Heart left ventricle (tissue), 16 donors: ENCODE measurements at regions of chr1 and their contacts with region 1.

Region 1: DNA sequence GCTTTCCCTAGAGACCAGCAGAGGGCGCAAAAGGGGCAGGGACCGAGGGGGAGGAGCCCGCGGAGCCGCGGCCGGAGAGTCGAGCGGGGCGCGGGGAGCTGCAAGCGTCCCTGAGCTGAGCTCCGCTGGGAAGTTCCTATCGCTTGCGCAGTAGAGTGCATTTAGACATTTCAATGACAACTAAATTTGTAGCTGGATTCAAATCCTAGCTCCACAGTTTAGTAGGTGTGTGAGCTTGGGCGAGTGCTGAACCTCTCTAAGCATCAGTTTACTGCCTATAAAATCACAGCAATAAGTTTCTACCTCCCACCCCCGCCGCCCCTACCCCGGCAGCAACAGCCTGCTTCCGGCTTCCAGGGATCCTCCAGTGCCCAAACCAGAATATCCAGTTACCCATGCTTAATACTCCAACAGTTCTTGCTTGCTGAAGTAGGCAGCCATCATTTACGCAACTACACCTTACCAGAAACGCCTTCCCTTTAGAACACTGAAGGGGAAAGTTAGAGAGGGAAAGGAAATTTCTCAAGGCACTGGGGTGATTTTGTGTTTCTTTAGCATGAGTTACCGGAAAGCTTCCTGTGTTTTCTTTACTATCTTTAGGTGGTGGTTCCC is 9.1 kb downstream of the TLR5 start:
- DNase-seq: peak; percentile 84 to 92 (median 88)
- ATAC-seq: peak; percentile 83 to 91 (median 90)
- H3K4me3 ChIP-seq: peak overlapping the region in 10 of 12 donors; percentile 23 to 55 (median 43)
- H3K27ac ChIP-seq: peak overlapping the region in 6 of 12 donors; percentile 7 to 68 (median 42)
- H3K4me1 ChIP-seq: peaks cover 0 to 59% (median 18%) of the 10 kb centered on the region in 12 donors
- H3K27me3 ChIP-seq: no peaks in the 10 kb centered on the region
- CTCF ChIP-seq: peak in 11 of 12 donors; percentile 92 to 99 (median 96)
- POLR2A ChIP-seq: no peak

Region 2: GRCh38 chr1:223087291-223088255 is 46.4 kb before region 1 on chr1:
- intact Hi-C with region 1: loop called in 3 of 10 experiments (anchors 5 kb)
- DNase-seq: no peak
- ATAC-seq: peak in 1 of 4 donors; percentile 22
- H3K4me3 ChIP-seq: no peak overlapping the region
- H3K27ac ChIP-seq: peak overlapping the region in 9 of 12 donors; percentile 17 to 83 (median 48)
- H3K4me1 ChIP-seq: peaks cover 0 to 14% (median 4%) of the 10 kb centered on the region in 12 donors
- H3K27me3 ChIP-seq: no peaks in the 10 kb centered on the region
- CTCF ChIP-seq: no peak
- POLR2A ChIP-seq: no peak

Region 3: DNA sequence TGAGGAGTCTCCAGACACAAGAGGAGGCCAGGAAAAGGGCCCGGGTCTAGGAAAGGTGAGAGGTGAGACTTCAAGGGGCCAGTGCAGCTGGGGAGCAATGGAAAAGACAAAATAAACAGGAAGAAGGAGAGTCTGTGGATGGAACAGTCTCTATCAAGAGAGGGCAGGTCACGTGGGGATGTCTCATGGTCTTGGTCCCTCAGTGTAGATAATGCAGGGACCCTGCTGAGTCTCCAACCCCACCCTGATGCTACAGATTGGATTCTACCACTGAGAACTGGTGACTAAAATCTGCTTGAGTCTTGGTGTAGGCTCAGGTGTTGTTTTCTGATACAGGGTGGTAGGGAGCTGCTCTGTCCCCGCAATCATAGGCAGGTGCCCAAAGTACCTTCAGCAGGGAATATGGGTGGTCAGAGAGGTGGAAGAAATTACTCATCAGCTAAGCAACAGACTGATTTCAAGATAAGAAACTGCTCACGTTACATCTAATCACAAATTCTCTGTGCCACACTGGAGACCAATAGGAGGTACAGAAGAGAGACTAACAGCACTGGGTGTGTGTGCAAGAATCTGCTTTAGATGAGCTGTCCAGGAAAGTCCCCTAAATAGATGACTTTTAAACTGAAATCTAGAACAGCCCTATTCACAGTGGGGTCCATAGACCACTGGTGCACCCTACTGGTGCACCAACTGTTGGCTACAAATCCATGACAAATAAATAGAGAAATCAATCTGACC is 110.6 kb after region 1 on chr1:
- intact Hi-C with region 1: loop called (anchors 2 to 5 kb)
- DNase-seq: no peak
- ATAC-seq: peak in 1 of 4 donors; percentile 53
- H3K4me3 ChIP-seq: no peak overlapping the region
- H3K27ac ChIP-seq: no peak overlapping the region
- H3K4me1 ChIP-seq: peaks cover 0 to 2% (median 0%) of the 10 kb centered on the region in 12 donors
- H3K27me3 ChIP-seq: no peaks in the 10 kb centered on the region
- CTCF ChIP-seq: peak in 10 of 12 donors; percentile 23 to 59 (median 42)
- POLR2A ChIP-seq: no peak

Region 4: GRCh38 chr1:223429313-223429731 is 295.4 kb after region 1 on chr1:
- intact Hi-C with region 1: loop called in 1 of 10 experiments (anchors 10 kb)
- DNase-seq: peak in 4 of 5 donors; percentile 28 to 45 (median 39)
- ATAC-seq: peak; percentile 79 to 92 (median 90)
- H3K4me3 ChIP-seq: no peak overlapping the region
- H3K27ac ChIP-seq: peak overlapping the region in 11 of 12 donors; percentile 45 to 73 (median 60)
- H3K4me1 ChIP-seq: peaks cover 0 to 26% (median 4%) of the 10 kb centered on the region in 12 donors
- H3K27me3 ChIP-seq: no peaks in the 10 kb centered on the region
- CTCF ChIP-seq: peak in 1 of 12 donors; percentile 9
- POLR2A ChIP-seq: no peak

Region 5: DNA sequence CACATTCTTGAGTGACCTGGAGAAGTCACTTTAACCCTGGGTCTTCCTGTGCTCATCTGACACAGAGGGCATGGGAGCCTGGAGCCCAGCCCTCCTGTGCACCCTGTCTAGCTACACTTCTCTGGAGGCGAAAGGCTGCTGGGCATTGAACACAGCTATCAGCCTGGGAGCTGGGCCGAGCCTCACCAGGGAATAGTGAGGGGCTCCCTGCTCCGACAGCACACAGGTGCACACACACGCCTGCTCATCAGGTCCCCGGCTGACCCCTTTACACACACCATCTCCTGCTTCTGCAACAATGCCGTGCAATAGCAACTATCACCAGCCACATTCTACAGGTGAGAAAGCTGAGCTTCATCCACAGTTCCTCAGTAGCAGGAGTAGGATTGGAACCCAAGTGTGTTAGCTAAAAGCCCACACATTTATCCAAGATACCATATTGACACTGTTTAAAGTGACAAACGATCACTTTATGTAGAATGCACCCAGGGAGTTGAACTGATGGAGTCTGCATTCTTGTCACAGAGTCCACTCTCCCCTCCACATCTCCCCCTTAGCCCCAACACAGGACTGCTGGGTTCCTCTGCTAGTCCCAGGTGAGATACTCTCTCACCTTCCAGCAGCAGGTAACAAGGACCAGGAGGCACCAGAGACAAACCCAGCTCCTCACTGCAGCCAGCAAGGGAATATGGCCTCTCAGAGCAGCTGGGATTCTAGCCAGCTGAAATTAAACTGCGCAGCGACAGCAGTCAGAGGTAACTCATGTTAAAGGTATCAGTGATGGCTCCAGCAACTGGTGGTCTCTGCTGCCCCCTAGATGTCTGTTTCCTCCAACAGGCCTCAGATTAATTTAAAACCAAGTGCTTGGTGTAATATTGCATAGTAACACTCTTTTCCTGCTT is 549.9 kb after region 1 on chr1:
- intact Hi-C with region 1: loop called (anchors 2 to 5 kb)
- DNase-seq: peak in 4 of 5 donors; percentile 21 to 51 (median 34)
- ATAC-seq: peak; percentile 26 to 67 (median 44)
- H3K4me3 ChIP-seq: no peak overlapping the region
- H3K27ac ChIP-seq: no peak overlapping the region
- H3K4me1 ChIP-seq: peaks cover 0 to 4% (median 0%) of the 10 kb centered on the region in 12 donors
- H3K27me3 ChIP-seq: peaks cover 0 to 9% (median 0%) of the 10 kb centered on the region in 9 donors
- CTCF ChIP-seq: peak; percentile 34 to 70 (median 59)
- POLR2A ChIP-seq: no peak

Region 6: DNA sequence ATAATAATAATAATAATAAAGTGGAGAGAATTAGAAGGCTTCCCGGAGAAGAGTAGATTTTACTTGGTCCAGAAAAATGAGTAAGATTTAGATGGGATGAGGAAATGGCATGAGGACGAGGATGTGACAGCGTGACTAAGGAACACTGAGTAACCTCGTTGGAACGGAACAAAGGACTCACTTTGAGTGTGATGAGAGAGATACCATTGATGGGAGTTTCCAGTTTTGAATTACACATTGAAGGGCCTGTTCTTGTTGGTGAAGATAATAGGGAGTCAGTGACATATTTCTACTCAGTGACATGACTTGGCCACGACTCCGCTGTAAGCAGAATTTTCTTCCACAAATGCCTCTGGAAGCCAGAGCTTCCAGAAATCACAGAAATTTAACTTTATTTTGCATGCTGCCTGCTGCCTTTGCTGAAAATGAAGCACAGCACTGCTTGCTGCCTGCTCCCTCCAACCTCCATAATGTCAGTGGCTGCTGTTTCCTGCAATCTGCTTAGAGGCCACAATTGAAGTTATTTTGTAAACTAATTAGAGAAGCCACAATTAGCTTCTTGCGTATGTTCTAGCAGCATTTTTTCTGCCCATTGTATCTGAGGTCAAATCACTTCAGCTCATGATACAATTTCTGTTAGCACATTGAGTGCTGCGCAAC is 946.3 kb after region 1 on chr1:
- intact Hi-C with region 1: no loop called
- DNase-seq: no peak
- ATAC-seq: no peak
- H3K4me3 ChIP-seq: no peak overlapping the region
- H3K27ac ChIP-seq: no peak overlapping the region
- H3K4me1 ChIP-seq: no peaks in the 10 kb centered on the region
- H3K27me3 ChIP-seq: peaks cover 0 to 6% (median 0%) of the 10 kb centered on the region in 9 donors
- CTCF ChIP-seq: no peak
- POLR2A ChIP-seq: no peak